ENCODE measurements at regions of chr17 and their contacts with region 1.

Region 1: GRCh38 chr17:55527540-55528118 is 16.4 kb upstream of the SMIM36 start:
- DNase-seq: no peak
- ATAC-seq: 0 out of 3 replicates have a peak, but pooled peaks have one; percentile 18
- H3K4me3 ChIP-seq: no peak overlapping the region
- H3K27ac ChIP-seq: no peak overlapping the region
- H3K4me1 ChIP-seq: 0 out of 2 replicates have a peak, but pooled peaks cover 3% of the 10 kb centered on the region
- H3K27me3 ChIP-seq: no peaks in the 10 kb centered on the region; a peak in 1 of 4 replicates
- CTCF ChIP-seq: peak; percentile 22 to 45 (median 44); a peak in 5 of 6 replicates
- EP300 ChIP-seq: no peak
- POLR2A ChIP-seq: no peak
- RAD21 ChIP-seq: peak; percentile 61

Region 2: GRCh38 chr17:55238179-55238930 is 289.3 kb before region 1 on chr17:
- CTCF ChIA-PET with region 1: no interaction called
- POLR2A ChIA-PET with region 1: no interaction called
- RAD21 ChIA-PET with region 1: no interaction called
- SMC1A ChIA-PET with region 1: no interaction called
- in situ Hi-C with region 1: no loop called
- intact Hi-C with region 1: no loop called
- DNase-seq: peak; percentile 59
- ATAC-seq: peak; percentile 98
- H3K4me3 ChIP-seq: peak overlapping the region; percentile 59
- H3K27ac ChIP-seq: no peak overlapping the region
- H3K4me1 ChIP-seq: peaks cover 13% of the 10 kb centered on the region
- H3K27me3 ChIP-seq: no peaks in the 10 kb centered on the region
- CTCF ChIP-seq: no peak
- EP300 ChIP-seq: no peak
- POLR2A ChIP-seq: peak; percentile 73
- RAD21 ChIP-seq: no peak

Region 3: GRCh38 chr17:55356434-55357328 is 170.9 kb before region 1 on chr17:
- CTCF ChIA-PET with region 1: interaction called, 9 read pairs
- POLR2A ChIA-PET with region 1: interaction called, 3 read pairs
- RAD21 ChIA-PET with region 1: no interaction called
- SMC1A ChIA-PET with region 1: interaction called, 12 read pairs
- in situ Hi-C with region 1: no loop called
- intact Hi-C with region 1: no loop called
- DNase-seq: peak; percentile 28
- ATAC-seq: peak; percentile 100
- H3K4me3 ChIP-seq: no peak overlapping the region
- H3K27ac ChIP-seq: no peak overlapping the region
- H3K4me1 ChIP-seq: no peaks in the 10 kb centered on the region
- H3K27me3 ChIP-seq: no peaks in the 10 kb centered on the region; a peak in 1 of 4 replicates
- CTCF ChIP-seq: peak; percentile 74 to 87 (median 84)
- EP300 ChIP-seq: no peak
- POLR2A ChIP-seq: no peak
- RAD21 ChIP-seq: peak; percentile 71

Region 4: GRCh38 chr17:55384643-55385232 is 142.9 kb before region 1 on chr17:
- CTCF ChIA-PET with region 1: no interaction called
- POLR2A ChIA-PET with region 1: no interaction called
- RAD21 ChIA-PET with region 1: no interaction called
- SMC1A ChIA-PET with region 1: no interaction called
- in situ Hi-C with region 1: no loop called
- intact Hi-C with region 1: no loop called
- DNase-seq: no peak
- ATAC-seq: no peak
- H3K4me3 ChIP-seq: no peak overlapping the region
- H3K27ac ChIP-seq: no peak overlapping the region
- H3K4me1 ChIP-seq: no peaks in the 10 kb centered on the region
- H3K27me3 ChIP-seq: no peaks in the 10 kb centered on the region
- CTCF ChIP-seq: no peak
- EP300 ChIP-seq: no peak
- POLR2A ChIP-seq: no peak
- RAD21 ChIP-seq: no peak

Region 5: GRCh38 chr17:55601874-55602364 is 74.3 kb after region 1 on chr17:
- CTCF ChIA-PET with region 1: interaction called, 123 read pairs
- POLR2A ChIA-PET with region 1: no interaction called
- RAD21 ChIA-PET with region 1: interaction called, 22 read pairs
- SMC1A ChIA-PET with region 1: interaction called, 34 read pairs
- in situ Hi-C with region 1: loop called (anchors 5 kb)
- intact Hi-C with region 1: loop called (anchors 1 kb)
- DNase-seq: no peak
- ATAC-seq: peak; percentile 69
- H3K4me3 ChIP-seq: no peak overlapping the region
- H3K27ac ChIP-seq: no peak overlapping the region
- H3K4me1 ChIP-seq: no peaks in the 10 kb centered on the region
- H3K27me3 ChIP-seq: no peaks in the 10 kb centered on the region
- CTCF ChIP-seq: peak; percentile 71 to 77 (median 75)
- EP300 ChIP-seq: no peak
- POLR2A ChIP-seq: no peak
- RAD21 ChIP-seq: peak; percentile 82

Region 6: GRCh38 chr17:55641676-55642081 is 114.0 kb after region 1 on chr17:
- CTCF ChIA-PET with region 1: interaction called, 59 read pairs
- POLR2A ChIA-PET with region 1: no interaction called
- RAD21 ChIA-PET with region 1: interaction called, 10 read pairs
- SMC1A ChIA-PET with region 1: interaction called, 4 read pairs
- in situ Hi-C with region 1: no loop called
- intact Hi-C with region 1: loop called (anchors 5 kb)
- DNase-seq: no peak
- ATAC-seq: peak; percentile 74
- H3K4me3 ChIP-seq: no peak overlapping the region
- H3K27ac ChIP-seq: no peak overlapping the region
- H3K4me1 ChIP-seq: no peaks in the 10 kb centered on the region
- H3K27me3 ChIP-seq: no peaks in the 10 kb centered on the region; a peak in 1 of 4 replicates
- CTCF ChIP-seq: peak; percentile 59 to 70 (median 68)
- EP300 ChIP-seq: no peak
- POLR2A ChIP-seq: no peak
- RAD21 ChIP-seq: peak; percentile 50

Region 7: DNA sequence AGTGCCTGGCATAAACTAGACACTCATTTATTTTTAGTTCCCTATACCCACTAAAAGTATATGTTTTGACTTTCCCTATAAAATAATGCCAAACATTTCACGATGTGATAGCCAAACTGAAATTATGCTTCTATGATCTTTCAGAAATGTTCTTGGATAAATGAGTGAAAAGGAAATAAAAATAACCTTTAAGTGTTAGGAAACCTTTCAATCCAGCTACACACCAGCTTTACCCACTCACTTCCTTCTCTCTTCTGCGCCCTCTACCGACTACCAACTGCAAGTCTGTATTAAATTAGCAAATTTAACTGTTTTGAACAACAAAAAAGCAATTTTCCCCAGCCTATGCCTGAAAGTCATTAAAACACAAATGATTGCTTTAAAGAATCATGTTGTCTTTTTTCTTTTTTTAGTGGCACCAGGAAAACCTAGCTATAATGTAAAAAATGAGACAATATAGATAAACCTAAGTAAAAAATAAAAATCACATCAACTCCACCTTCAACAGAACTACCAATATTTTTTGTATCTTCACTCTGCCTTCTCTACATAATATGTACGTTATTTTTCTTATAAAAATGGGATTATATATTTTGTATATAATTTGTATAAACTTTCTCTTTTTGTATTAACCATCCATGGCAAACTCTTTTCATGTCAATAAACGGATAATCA is 208.2 kb after region 1 on chr17:
- CTCF ChIA-PET with region 1: interaction called, 14 read pairs
- POLR2A ChIA-PET with region 1: no interaction called
- RAD21 ChIA-PET with region 1: no interaction called
- SMC1A ChIA-PET with region 1: interaction called, 3 read pairs
- in situ Hi-C with region 1: no loop called
- intact Hi-C with region 1: no loop called
- DNase-seq: no peak
- ATAC-seq: peak; percentile 69
- H3K4me3 ChIP-seq: no peak overlapping the region
- H3K27ac ChIP-seq: no peak overlapping the region
- H3K4me1 ChIP-seq: no peaks in the 10 kb centered on the region; the same call in 1 of the 2 replicates
- H3K27me3 ChIP-seq: no peaks in the 10 kb centered on the region; a peak in 1 of 4 replicates
- CTCF ChIP-seq: peak; percentile 59 to 67 (median 63)
- EP300 ChIP-seq: no peak
- POLR2A ChIP-seq: no peak
- RAD21 ChIP-seq: peak; percentile 35

Region 8: DNA sequence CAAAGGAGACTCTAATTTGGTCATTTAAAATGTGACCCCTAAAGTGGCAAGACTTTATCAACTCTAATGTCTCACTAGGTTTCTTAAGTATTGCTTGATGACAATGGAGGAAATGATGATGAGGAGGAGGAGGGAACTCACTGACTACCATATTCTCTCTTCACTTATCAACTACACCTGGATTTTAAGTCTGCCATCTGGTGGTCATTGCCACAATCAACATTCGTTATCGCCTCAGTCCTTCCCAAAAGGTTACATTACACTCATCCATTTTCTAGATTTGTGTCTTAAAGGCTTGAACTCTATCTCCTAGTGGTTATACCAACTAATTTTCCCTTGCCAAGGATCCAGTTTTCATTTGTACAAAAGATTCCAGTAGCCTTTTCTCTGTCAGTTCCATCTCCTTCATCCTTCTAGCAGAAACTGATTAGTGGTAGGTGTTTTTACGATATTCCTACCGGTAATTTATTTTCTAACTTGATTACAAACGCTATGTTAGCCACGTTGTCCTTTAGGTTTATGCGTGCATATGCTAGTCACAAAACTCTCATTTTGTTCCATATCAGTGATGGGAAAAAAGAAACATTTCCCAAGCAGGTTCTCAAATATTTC is 951.3 kb after region 1 on chr17:
- CTCF ChIA-PET with region 1: no interaction called
- POLR2A ChIA-PET with region 1: no interaction called
- RAD21 ChIA-PET with region 1: no interaction called
- SMC1A ChIA-PET with region 1: no interaction called
- in situ Hi-C with region 1: no loop called
- intact Hi-C with region 1: loop called (anchors 2 kb)
- DNase-seq: no peak
- ATAC-seq: peak; percentile 73
- H3K4me3 ChIP-seq: no peak overlapping the region
- H3K27ac ChIP-seq: no peak overlapping the region
- H3K4me1 ChIP-seq: no peaks in the 10 kb centered on the region
- H3K27me3 ChIP-seq: no peaks in the 10 kb centered on the region; a peak in 1 of 4 replicates
- CTCF ChIP-seq: peak; percentile 45 to 53 (median 53); a peak in 5 of 6 replicates
- EP300 ChIP-seq: no peak
- POLR2A ChIP-seq: no peak
- RAD21 ChIP-seq: peak; percentile 50; the same call in 1 of the 2 replicates

Measured in GM12878 (cell line).